BJ (cell line): ENCODE measurements at regions of chr6 and their contacts with region 1.

Region 1: DNA sequence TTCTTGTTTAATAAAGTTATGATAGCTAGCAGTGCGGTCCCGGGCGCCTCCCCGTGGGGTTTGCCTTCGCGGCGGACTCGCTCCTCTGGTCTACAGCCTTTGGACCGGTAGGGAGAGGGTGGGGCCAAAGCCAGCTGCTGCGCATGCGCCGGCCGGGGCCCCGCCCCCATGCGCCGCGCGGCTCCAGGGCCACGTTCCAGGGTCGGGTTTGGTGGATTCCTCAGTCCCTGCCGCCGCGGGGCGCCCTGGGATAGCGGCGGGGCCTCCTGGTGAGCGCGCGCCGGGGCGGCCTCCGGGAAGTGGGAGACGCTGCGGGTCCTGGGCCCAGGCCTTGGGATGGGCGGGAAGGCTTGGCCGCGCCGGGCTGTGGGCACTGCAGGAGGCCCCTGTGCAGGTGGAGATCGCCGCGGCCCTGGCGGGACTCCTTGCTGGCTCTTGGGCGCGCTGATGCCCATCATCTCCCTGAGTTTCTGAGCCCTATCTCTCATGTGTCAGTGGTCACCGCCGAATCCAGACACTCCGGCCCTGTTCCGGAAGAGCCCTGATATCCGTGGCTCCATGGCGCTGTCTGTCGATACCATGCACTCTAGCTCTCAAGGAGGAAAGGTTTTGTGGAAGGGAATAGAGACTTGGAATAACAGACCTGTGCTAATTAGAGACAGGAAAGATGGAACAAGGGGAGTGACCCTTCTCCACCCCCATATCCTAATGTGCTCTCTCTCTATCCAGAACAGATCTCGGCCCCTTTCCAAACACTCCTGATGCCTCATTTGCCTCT is at the start of gene VARS2:
- DNase-seq: peak; percentile 64
- H3K4me3 ChIP-seq: peak within 1 kb of the TSS; percentile 37
- H3K27me3 ChIP-seq: no peaks in the 10 kb centered on the region
- CTCF ChIP-seq: peak; percentile 49
- polyA plus RNA-seq, gene VARS2: 14.8 and 16.1 TPM in 2 replicates

Region 2: GRCh38 chr6:30821862-30822782 is 92.1 kb before region 1 on chr6:
- CTCF ChIA-PET with region 1: interaction called, 77 read pairs
- POLR2A ChIA-PET with region 1: interaction called, 3 read pairs
- DNase-seq: no peak
- H3K4me3 ChIP-seq: no peak overlapping the region
- H3K27me3 ChIP-seq: no peaks in the 10 kb centered on the region
- CTCF ChIP-seq: peak; percentile 56

Region 3: DNA sequence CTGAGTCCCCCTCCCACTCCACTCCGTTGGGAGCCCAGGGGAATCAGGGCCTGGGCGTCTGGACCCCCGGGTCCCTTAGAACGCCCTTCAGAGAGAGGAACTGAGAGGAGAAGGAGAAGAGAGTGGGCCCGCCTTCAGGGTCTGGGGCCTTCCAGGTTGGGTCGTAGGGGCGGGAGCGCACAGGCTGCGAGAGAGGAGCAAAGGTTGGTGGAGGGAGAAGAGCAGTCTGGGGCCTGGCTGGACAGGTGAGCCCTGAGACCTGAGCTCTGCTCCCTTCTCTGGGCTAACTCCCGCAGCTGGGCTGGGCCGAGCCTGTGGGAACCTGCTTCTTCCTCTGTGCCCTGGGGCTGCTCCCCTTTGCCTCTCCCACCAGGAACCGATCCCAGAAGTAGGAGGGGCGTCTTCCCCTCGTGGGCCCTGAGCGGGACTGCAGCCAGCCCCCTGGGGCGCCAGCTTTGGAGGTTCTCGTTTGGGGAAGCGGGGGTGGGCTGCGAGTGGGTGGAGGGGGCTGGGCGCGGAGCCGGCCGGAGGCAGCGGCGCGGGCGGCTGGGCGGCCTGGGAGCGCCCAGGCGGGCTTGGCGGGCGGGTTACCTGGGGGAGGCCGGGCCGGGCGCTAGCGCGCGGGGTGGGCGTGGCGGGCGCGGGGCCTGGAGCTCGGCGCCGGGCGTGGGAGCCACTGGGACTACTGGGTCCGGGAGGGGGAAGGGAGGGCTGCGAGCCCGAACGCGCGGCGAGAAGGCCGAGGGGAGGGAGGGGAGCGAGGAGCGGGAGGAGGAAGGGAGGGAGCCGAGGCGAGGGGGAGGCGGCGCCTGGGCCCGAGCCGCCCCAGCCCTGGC is 30.4 kb before region 1 on chr6 and contains the start of gene DDR1:
- CTCF ChIA-PET with region 1: interaction called, 37 read pairs
- POLR2A ChIA-PET with region 1: no interaction called
- DNase-seq: no peak
- H3K4me3 ChIP-seq: peak within 1 kb of the TSS; percentile 60
- H3K27me3 ChIP-seq: no peaks in the 10 kb centered on the region
- CTCF ChIP-seq: no peak
- polyA plus RNA-seq, gene DDR1: 10.6 and 17.0 TPM in 2 replicates

Region 4: GRCh38 chr6:30942338-30943060 is 28.2 kb after region 1 on chr6:
- CTCF ChIA-PET with region 1: interaction called, 12 read pairs
- POLR2A ChIA-PET with region 1: no interaction called
- DNase-seq: peak; percentile 35
- H3K4me3 ChIP-seq: no peak overlapping the region
- H3K27me3 ChIP-seq: peaks cover 10% of the 10 kb centered on the region
- CTCF ChIP-seq: peak; percentile 84

Region 5: GRCh38 chr6:31079656-31080261 is 165.5 kb after region 1 on chr6:
- CTCF ChIA-PET with region 1: interaction called, 194 read pairs
- POLR2A ChIA-PET with region 1: no interaction called
- DNase-seq: no peak
- H3K4me3 ChIP-seq: no peak overlapping the region
- H3K27me3 ChIP-seq: no peaks in the 10 kb centered on the region
- CTCF ChIP-seq: peak; percentile 87

Region 6: GRCh38 chr6:31252625-31253024 is 338.4 kb after region 1 on chr6:
- CTCF ChIA-PET with region 1: no interaction called
- POLR2A ChIA-PET with region 1: no interaction called
- DNase-seq: no peak
- H3K4me3 ChIP-seq: no peak overlapping the region
- H3K27me3 ChIP-seq: peaks cover 4% of the 10 kb centered on the region
- CTCF ChIP-seq: no peak